K562 (cell line): ENCODE measurements at regions of chr20 and their contacts with region 1.

Region 1: GRCh38 chr20:64255361-64256281 is at the start of gene PCMTD2:
- DNase-seq: peak; percentile 91 to 99 (median 98)
- ATAC-seq: peak; percentile 95
- H3K4me3 ChIP-seq: peak within 1 kb of the TSS; percentile 91
- H3K27ac ChIP-seq: peak within 1 kb of the TSS; percentile 88
- H3K4me1 ChIP-seq: peaks cover 21% of the 10 kb centered on the region in 2 experiments
- H3K27me3 ChIP-seq: 0 out of 5 replicates have a peak, but pooled peaks cover 0 to 4% of the 10 kb centered on the region in 2 experiments
- CTCF ChIP-seq: peak in 1 of 3 experiments; percentile 10; a peak in 1 of 6 replicates
- EP300 ChIP-seq: no peak
- POLR2A ChIP-seq: peak; percentile 61
- RAD21 ChIP-seq: 0 out of 4 replicates have a peak, but pooled peaks of 1 of the 2 experiments have one; percentile 6
- polyA plus RNA-seq, gene PCMTD2: 11.3 to 18.1 TPM

Region 2: GRCh38 chr20:64192406-64192805 is 63.2 kb before region 1 on chr20:
- CTCF ChIA-PET with region 1: no interaction called
- POLR2A ChIA-PET with region 1: interaction called, 3 read pairs
- in situ Hi-C with region 1: loop called (anchors 5 kb)
- intact Hi-C with region 1: no loop called
- DNase-seq: peak in 2 of 4 experiments; percentile 39 to 40
- ATAC-seq: no peak
- H3K4me3 ChIP-seq: no peak overlapping the region
- H3K27ac ChIP-seq: no peak overlapping the region
- H3K4me1 ChIP-seq: no peaks in the 10 kb centered on the region
- H3K27me3 ChIP-seq: peaks cover 48 to 89% of the 10 kb centered on the region in 2 experiments
- CTCF ChIP-seq: no peak
- EP300 ChIP-seq: no peak
- POLR2A ChIP-seq: no peak
- RAD21 ChIP-seq: no peak

Region 3: GRCh38 chr20:64244870-64245603 is 10.6 kb before region 1 on chr20:
- CTCF ChIA-PET with region 1: no interaction called
- POLR2A ChIA-PET with region 1: interaction called, 20 read pairs
- in situ Hi-C with region 1: no loop called
- intact Hi-C with region 1: no loop called
- DNase-seq: no peak
- ATAC-seq: no peak
- H3K4me3 ChIP-seq: no peak overlapping the region
- H3K27ac ChIP-seq: no peak overlapping the region
- H3K4me1 ChIP-seq: peaks cover 0 to 9% of the 10 kb centered on the region in 2 experiments; a peak in 2 of 5 replicates
- H3K27me3 ChIP-seq: peaks cover 34 to 72% of the 10 kb centered on the region in 2 experiments; a peak in 4 of 5 replicates
- CTCF ChIP-seq: no peak
- EP300 ChIP-seq: no peak
- POLR2A ChIP-seq: no peak
- RAD21 ChIP-seq: no peak